T-cell (primary cell): ENCODE measurements at regions of chr20 and their contacts with region 1.

Region 1: GRCh38 chr20:35079472-35080347 is 12.9 kb downstream of the TRPC4AP start:
- DNase-seq: no peak
- ATAC-seq: peak in 1 of 4 experiments; percentile 7
- H3K4me3 ChIP-seq: no peak overlapping the region
- H3K4me3 Mint-ChIP-seq: peak overlapping the region in 1 of 3 donors; percentile 45
- H3K27ac ChIP-seq: peak overlapping the region; percentile 5
- H3K27ac Mint-ChIP-seq: no peak overlapping the region
- H3K4me1 ChIP-seq: peaks cover 0 to 10% of the 10 kb centered on the region in 2 experiments
- H3K4me1 Mint-ChIP-seq: peaks cover 43 to 59% (median 52%) of the 10 kb centered on the region in 3 donors
- H3K27me3 ChIP-seq: no peaks in the 10 kb centered on the region
- H3K27me3 Mint-ChIP-seq: no peaks in the 10 kb centered on the region

Region 2: DNA sequence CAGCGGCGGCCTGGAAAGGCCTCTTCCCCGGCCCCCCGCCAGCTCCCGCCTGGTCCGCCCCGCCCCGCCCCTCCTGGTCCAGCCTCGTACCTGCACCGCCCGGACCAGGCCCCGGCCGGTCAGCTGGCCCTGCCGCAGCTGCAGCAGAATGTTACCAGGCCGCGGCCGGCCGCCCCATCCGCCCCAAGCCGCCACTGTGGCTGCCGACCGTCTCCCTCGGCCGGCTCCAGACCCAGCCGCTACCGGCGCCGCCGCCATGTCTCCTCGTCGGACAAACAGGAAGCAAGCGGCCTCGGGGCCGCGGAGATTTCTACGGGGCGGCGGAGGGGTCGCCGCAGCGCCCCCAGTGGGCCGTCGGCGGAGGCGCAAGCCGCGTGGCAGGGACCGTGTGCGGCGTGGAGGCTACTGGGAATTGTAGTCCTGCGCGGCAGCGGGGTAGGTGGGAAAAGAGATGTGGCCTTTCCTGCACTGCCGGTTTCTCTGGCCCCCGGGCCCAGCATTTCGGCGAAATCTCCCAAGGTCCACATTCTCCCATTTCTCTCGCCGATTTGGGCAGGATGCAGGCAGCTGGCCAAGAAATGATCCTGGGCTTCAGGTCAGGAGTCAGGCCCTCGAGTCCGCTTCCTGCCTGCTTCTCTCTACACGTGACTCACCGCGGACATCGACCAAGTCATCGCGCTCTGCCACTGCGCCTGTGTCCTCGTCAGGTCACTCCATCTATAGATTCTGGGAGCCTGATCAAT is 13.0 kb after region 1 on chr20 and contains the start of gene TRPC4AP:
- CTCF ChIA-PET with region 1: interaction called, 5 to 13 read pairs
- POLR2A ChIA-PET with region 1: no interaction called
- DNase-seq: peak; percentile 77 to 95 (median 85)
- ATAC-seq: peak; percentile 97 to 99 (median 97)
- H3K4me3 ChIP-seq: peak within 1 kb of the TSS; percentile 88 to 91
- H3K4me3 Mint-ChIP-seq: peak within 1 kb of the TSS; percentile 86 to 98 (median 87)
- H3K27ac ChIP-seq: peak within 1 kb of the TSS; percentile 67
- H3K27ac Mint-ChIP-seq: peak within 1 kb of the TSS; percentile 92 to 95
- H3K4me1 ChIP-seq: peaks cover 11 to 36% of the 10 kb centered on the region in 2 experiments
- H3K4me1 Mint-ChIP-seq: peaks cover 40 to 51% (median 51%) of the 10 kb centered on the region in 3 donors
- H3K27me3 ChIP-seq: no peaks in the 10 kb centered on the region
- H3K27me3 Mint-ChIP-seq: no peaks in the 10 kb centered on the region
- total RNA-seq, gene TRPC4AP: 56.3 to 65.5 (median 63.5) TPM

Region 3: DNA sequence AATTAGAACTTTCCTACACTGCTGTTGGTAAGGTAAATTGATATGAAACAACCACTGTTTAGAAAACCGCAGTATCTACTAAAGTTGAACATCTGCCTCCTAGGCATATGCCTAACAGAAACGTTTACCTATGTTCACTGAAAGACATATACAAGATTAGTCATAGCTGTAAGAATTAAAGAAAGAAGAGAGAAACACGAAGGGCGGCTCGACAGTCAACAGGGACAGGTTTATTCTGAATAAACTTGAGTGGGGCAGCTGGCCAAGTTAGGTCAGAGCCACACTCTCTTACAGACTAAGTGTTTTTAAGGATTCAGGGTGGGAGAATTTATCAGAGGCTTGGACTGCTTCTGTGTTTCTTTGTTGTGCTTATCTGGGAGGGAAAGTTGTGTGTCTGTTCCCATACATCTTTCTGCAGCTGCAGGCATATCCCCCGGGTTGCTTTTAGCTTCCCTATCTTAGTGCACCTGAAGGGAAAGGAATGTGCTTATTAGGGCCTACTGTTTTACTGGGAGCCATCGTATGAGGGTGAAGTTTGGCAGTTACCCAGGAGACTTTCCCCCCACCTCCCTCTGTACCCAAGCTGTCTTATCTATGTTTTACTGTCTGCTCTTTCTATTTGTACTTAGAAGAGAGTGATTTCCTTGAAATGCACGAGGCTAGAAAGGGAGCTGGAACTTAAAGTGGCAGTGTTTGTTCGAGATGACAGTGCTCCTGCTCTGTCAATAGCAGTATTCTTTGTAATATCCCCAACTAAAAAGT is 112.6 kb after region 1 on chr20:
- CTCF ChIA-PET with region 1: no interaction called
- POLR2A ChIA-PET with region 1: no interaction called
- DNase-seq: no peak
- ATAC-seq: no peak
- H3K4me3 ChIP-seq: no peak overlapping the region
- H3K4me3 Mint-ChIP-seq: no peak overlapping the region
- H3K27ac ChIP-seq: no peak overlapping the region
- H3K27ac Mint-ChIP-seq: no peak overlapping the region
- H3K4me1 ChIP-seq: no peaks in the 10 kb centered on the region
- H3K4me1 Mint-ChIP-seq: no peaks in the 10 kb centered on the region
- H3K27me3 ChIP-seq: no peaks in the 10 kb centered on the region
- H3K27me3 Mint-ChIP-seq: no peaks in the 10 kb centered on the region